ENCODE measurements at regions of chr1 and their contacts with region 1.

Region 1: DNA sequence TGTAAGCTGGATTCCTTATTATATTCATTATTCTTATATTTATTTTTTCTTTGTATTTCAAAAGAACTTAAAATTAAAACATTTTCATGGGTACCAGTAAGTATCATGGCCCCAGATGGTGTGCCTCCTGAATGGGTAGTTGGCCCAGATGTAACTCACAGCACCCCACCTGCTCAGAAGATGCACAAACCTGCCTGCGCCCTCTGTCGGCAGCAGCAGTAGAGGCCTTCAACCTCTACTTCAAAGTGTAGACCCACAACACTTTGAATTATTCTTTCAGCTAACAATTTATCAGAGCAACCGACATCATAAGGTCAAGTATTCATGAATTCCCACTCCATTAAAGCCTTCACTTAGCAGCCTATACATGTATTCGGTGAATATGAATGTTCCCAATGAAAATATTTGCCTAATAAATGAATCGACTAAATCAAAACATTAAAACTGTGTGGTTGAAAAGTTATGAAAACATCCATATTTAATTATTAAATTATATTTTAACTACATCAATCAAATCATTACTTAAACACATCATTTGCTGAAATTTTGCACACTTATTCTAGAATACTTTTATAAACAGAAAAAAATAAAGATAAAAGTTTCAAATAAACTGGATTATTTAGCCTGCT is 25.4 kb downstream of the PIGM start:
- DNase-seq: peak; percentile 23
- H3K4me3 ChIP-seq: no peak overlapping the region
- H3K27ac ChIP-seq: no peak overlapping the region
- H3K27me3 ChIP-seq: peaks cover 7% of the 10 kb centered on the region
- CTCF ChIP-seq: peak; percentile 99

Region 2: DNA sequence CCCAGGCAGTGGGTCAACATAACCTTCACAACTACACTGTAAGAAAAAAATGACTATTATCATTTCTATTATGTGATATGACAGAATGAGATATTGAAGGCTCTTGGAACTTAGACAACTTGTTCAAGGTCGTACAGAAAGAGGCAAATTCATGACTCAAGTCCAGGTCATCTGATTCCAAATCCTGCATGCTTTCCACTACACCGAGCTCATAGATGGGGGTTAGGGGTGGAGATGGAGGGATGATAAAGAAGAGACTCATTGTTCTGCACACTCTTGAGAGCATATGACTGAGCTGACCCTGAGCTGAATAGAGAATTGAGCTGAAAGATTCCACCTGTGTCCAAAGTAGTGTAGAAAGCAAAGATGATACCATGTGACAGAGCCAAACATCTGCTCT is 201.5 kb before region 1 on chr1:
- CTCF ChIA-PET with region 1: interaction called, 116 read pairs
- POLR2A ChIA-PET with region 1: no interaction called
- DNase-seq: no peak
- H3K4me3 ChIP-seq: no peak overlapping the region
- H3K27ac ChIP-seq: no peak overlapping the region
- H3K27me3 ChIP-seq: peaks cover 17% of the 10 kb centered on the region
- CTCF ChIP-seq: no peak

Region 3: GRCh38 chr1:159891275-159892157 is 114.9 kb before region 1 on chr1:
- CTCF ChIA-PET with region 1: interaction called, 132 read pairs
- POLR2A ChIA-PET with region 1: no interaction called
- DNase-seq: peak; percentile 81
- H3K4me3 ChIP-seq: no peak overlapping the region
- H3K27ac ChIP-seq: no peak overlapping the region
- H3K27me3 ChIP-seq: no peaks in the 10 kb centered on the region
- CTCF ChIP-seq: peak; percentile 97

Region 4: DNA sequence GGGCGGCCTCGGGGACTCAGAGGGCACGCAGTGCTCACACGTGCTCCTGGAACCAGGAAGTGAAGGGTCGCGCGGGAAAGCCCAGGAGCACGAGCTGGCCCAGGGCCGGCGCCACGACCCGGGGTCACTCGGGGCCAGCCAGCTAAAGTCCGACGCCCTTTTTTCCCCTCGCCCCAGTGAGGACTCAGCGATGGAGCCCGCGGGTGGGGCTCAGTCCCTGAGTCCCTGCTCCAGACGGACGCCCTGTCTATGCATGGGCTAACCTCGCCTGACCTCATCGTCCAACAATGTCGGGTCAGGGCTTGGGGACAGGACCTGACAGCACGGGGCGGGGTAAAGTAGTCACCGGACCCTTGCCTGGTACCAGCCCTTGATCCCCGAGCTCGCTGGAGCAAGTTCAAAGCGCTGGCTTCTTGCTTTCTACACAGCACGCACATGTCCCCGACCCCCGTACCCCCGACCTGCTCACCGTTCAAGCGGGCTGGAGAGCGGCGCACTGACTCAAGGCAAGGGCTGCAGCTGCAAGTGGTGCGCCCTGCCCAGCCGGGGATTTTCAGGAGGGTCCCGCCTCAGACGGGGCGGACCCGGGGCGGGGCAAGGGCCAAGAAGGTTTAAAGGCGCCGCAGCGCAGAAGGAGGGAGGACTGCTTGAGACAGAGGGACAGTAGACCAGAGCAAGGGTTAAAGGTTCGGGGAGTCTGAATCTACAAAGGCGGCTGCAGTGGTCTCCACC is 81.3 kb before region 1 on chr1 and contains the start of gene TAGLN2:
- CTCF ChIA-PET with region 1: interaction called, 380 read pairs
- POLR2A ChIA-PET with region 1: interaction called, 3 read pairs
- DNase-seq: peak; percentile 85
- H3K4me3 ChIP-seq: peak within 1 kb of the TSS; percentile 97
- H3K27ac ChIP-seq: peak within 1 kb of the TSS; percentile 97
- H3K27me3 ChIP-seq: no peaks in the 10 kb centered on the region
- CTCF ChIP-seq: no peak
- polyA plus RNA-seq, gene TAGLN2: 400 and 472 TPM in 2 replicates

Region 5: DNA sequence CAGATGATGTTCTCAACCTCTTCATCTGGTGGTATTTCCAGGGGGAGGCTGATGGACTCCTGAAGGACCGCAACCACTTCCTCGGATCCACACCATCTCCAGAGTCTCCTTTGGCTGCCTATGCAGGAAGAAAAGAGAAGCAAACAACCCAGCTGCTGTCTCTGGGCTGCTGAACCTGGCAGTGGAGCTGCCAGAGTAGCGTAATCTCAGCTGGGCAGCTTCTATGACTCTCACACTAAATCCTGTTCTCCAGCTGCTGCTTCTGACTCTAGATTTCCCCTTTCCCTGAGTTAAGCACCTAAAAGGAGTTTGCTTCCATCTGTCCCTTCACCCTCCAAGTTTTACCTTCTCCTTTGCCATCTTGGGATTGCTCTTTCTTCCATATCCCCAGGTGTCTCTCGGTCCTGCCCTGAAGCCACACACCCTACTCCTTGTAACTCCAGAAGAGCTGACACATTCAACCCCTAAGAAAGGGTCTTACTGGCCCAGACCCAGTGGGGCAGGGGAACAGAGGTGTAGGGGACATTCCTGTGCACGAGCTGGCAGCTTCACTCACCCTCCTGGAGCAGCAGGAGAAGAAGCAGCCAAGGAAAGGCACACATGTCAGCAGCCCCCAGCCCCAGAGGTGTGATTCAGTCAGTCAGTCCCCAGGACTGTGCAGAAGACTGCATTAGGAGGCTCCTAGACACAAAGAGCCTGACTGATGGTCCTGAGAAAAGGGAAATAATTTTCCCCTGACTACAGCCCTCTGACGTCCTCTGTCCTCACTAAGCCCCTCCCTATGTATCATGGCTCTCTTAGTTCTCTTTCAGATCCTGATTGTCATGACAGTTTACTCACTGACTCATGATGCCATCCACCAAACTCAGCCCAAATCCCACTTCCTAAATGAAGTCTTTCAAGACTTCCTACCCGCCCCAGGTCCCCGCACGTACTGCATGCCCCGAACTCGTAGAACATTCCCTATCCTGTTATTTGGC is 52.6 kb before region 1 on chr1 and contains the start of gene SLAMF9:
- CTCF ChIA-PET with region 1: interaction called, 81 read pairs
- POLR2A ChIA-PET with region 1: no interaction called
- DNase-seq: no peak
- H3K4me3 ChIP-seq: no peak within 1 kb of the TSS
- H3K27ac ChIP-seq: no peak within 1 kb of the TSS
- H3K27me3 ChIP-seq: peaks cover 20% of the 10 kb centered on the region
- CTCF ChIP-seq: no peak
- polyA plus RNA-seq, gene SLAMF9: 0.11 TPM in 1 of 2 replicates, not detected in the other

Region 6: DNA sequence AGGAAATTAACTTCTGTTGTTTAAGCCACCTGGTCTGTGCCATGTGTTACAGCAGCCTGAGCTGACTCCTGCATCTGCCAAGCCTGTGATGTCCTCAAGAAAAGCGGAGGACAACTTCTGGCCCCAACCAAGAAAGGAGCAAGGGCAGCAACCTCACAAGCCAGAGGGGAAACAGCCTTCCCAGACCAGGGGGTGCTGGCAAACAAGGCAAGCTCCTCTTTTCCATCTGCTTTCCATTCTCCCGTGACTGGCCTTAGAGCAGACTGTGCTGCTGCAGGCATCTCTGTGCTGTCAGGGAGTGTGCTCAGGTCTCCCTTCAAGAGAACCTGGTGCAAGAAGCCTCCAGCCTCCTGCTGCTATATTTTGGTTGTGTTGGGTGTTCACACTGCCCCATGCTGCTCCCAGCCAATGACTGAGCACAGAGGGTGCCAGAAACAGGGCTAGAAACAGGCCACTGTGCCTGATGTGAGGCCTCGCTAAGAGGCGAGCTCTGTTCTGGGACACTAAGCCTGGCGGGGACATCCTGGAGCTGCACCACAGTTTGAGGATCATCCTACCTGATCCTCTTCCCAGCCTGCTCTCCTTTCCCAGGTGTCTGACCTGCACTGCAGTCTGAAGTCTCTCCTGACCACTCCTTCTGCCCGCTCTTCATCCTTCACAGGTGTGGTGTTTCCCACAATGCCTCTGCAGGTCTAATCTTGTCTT is 24.9 kb before region 1 on chr1:
- CTCF ChIA-PET with region 1: interaction called, 38 read pairs
- POLR2A ChIA-PET with region 1: no interaction called
- DNase-seq: no peak
- H3K4me3 ChIP-seq: no peak overlapping the region
- H3K27ac ChIP-seq: no peak overlapping the region
- H3K27me3 ChIP-seq: peaks cover 26% of the 10 kb centered on the region
- CTCF ChIP-seq: no peak

Region 7: DNA sequence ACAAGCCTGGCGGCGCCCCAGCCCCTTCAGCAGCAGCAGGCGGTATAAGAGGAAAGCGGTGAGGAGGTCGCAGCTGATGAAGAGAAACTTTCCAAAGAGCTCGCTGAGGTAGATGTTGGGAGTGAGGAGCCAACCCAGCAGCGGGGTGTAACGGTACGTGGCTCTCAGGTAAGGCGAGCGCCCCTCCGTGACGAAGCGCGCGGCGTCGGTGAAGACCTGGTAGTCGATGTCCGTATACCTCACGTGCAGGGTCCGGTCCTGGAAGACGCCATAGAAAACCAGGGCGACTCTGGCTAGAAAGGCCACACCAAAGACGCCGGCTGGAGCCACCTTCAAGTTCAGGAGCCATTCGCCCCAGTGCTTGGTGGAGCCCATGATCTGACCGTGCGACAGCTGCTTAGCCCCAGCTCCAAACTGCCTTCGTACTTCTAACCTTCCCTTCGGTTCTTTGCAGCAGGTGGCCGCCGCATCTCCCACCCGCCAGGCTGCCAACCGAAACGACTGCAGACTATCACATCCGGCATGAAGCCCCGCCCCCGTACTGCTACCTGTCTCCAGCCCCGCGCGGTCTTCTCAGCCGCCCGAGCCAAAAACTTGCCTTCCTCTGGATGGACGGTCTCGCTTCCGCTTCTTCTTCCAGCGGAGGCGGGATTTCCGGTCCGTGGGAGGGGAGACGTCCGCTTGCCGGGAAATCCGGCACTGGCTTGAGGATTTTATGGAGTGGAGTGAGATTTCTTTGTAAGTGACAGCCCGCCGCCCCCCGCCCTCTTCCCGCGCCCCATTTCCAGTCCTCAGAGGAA is 25.1 kb after region 1 on chr1 and contains the start of gene PIGM:
- CTCF ChIA-PET with region 1: interaction called, 61 read pairs
- POLR2A ChIA-PET with region 1: no interaction called
- DNase-seq: peak; percentile 60
- H3K4me3 ChIP-seq: peak within 1 kb of the TSS; percentile 94
- H3K27ac ChIP-seq: no peak within 1 kb of the TSS
- H3K27me3 ChIP-seq: peaks cover 5% of the 10 kb centered on the region
- CTCF ChIP-seq: no peak
- polyA plus RNA-seq, gene PIGM: 5.1 and 6.6 TPM in 2 replicates

Region 8: DNA sequence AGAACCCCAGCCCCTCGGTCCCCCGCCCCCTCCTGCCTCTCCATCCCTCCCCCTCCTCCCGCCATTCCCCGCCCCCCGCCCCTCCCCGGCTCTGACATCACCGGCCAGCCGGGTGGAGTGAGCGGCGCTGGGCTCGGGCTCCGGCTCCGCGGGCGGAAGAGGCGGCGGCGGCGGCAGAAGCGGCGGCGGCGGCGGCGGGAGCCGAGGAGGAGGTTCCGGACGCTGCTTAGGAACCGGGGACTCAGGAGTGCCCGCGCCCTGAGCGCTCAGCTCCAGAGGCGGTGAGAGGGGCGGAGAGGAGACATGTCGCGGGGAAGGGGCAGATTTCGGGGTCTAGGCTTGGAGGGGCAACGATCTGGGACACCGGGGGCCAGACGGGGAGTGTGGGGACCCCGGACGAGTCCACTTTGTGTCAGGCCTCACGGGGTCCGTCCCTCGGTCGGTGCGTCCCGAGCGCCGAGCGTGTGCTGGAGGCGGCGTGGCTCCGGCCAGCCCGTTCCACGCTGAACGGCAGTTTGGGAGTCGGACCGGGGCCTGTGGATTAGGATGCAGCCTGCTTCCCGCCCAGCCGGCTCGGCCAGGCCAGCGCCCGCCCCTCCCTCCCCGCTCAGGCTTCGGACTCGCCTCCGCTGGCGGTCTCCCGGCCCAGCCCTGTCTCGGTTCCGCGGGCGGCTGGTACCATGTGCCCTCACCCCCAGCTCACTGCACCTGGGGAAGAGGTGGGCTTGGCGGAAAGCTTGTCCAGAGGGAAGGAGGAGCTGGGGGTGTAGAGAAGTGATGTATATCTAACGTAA is 199.0 kb after region 1 on chr1 and contains the start of gene PEA15:
- CTCF ChIA-PET with region 1: no interaction called
- POLR2A ChIA-PET with region 1: no interaction called
- DNase-seq: no peak
- H3K4me3 ChIP-seq: peak within 1 kb of the TSS; percentile 95
- H3K27ac ChIP-seq: peak within 1 kb of the TSS; percentile 75
- H3K27me3 ChIP-seq: no peaks in the 10 kb centered on the region
- CTCF ChIP-seq: no peak
- polyA plus RNA-seq, gene PEA15: 512 and 555 TPM in 2 replicates